Activated CD4-positive, alpha-beta T cell treated with anti-CD3 and anti-CD28 coated beads, Interleukin-2, amount 10 ng/mL, durations not matched to agents 7 days and 5 days (primary cell): ENCODE measurements at regions of chr2 and their contacts with region 1.

Region 1: GRCh38 chr2:101395545-101396315 is 8.4 kb upstream of the CREG2 start:
- DNase-seq: no peak
- H3K4me3 Mint-ChIP-seq: no peak overlapping the region
- H3K27ac Mint-ChIP-seq: no peak overlapping the region
- H3K4me1 Mint-ChIP-seq: no peaks in the 10 kb centered on the region
- H3K27me3 Mint-ChIP-seq: peaks cover 15% of the 10 kb centered on the region

Region 2: DNA sequence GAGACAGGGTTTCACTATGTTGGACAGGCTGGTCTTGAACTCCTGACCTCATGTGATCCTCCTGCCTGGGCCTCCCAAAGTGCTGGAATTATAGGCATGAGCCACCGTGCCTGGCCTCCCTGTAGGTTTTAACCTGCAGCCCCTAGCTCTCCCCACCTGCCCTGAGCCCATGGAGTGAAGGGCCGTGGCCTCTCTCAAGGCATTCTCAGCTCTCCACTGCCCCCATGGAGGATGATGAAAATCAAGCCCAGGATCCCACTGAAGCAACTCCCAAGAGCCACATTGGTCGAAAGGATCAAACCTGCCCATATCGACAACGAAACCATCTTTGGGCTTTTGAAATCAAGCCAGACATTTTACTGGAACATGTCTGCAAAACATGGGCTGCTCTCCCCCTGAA is 14.0 kb after region 1 on chr2:
- CTCF ChIA-PET with region 1: interaction called, 10 read pairs
- POLR2A ChIA-PET with region 1: no interaction called
- DNase-seq: no peak
- H3K4me3 Mint-ChIP-seq: no peak overlapping the region
- H3K27ac Mint-ChIP-seq: no peak overlapping the region
- H3K4me1 Mint-ChIP-seq: peaks cover 4% of the 10 kb centered on the region
- H3K27me3 Mint-ChIP-seq: no peaks in the 10 kb centered on the region